Activated B cell treated with CpG ODN at 0.5 μM for 24 hours (primary cell): ENCODE measurements at regions of chr12 and their contacts with region 1.

Region 1: GRCh38 chr12:53727310-53728041 is at the start of gene CALCOCO1:
- DNase-seq: peak; percentile 90
- ATAC-seq: peak; percentile 97
- H3K4me3 Mint-ChIP-seq: peak within 1 kb of the TSS; percentile 97
- H3K27ac Mint-ChIP-seq: peak within 1 kb of the TSS; percentile 88
- H3K4me1 Mint-ChIP-seq: peaks cover 24% of the 10 kb centered on the region
- H3K27me3 Mint-ChIP-seq: no peaks in the 10 kb centered on the region
- CTCF ChIP-seq: no peak
- total RNA-seq, gene CALCOCO1: 44.2 and 59.5 TPM in 2 replicates

Region 2: GRCh38 chr12:53005986-53006809 is 721.3 kb before region 1 on chr12 and contains the start of gene EIF4B:
- CTCF ChIA-PET with region 1: no interaction called
- POLR2A ChIA-PET with region 1: no interaction called
- intact Hi-C with region 1: loop called (anchors 1 kb)
- DNase-seq: peak; percentile 97
- ATAC-seq: peak; percentile 90
- H3K4me3 Mint-ChIP-seq: peak within 1 kb of the TSS; percentile 98
- H3K27ac Mint-ChIP-seq: peak within 1 kb of the TSS; percentile 98
- H3K4me1 Mint-ChIP-seq: peaks cover 51% of the 10 kb centered on the region
- H3K27me3 Mint-ChIP-seq: peaks cover 1% of the 10 kb centered on the region
- CTCF ChIP-seq: no peak
- total RNA-seq, gene EIF4B: 726 and 733 TPM in 2 replicates

Region 3: GRCh38 chr12:53625946-53626701 is 101.4 kb before region 1 on chr12 and contains the start of gene ATF7:
- CTCF ChIA-PET with region 1: no interaction called
- POLR2A ChIA-PET with region 1: no interaction called
- intact Hi-C with region 1: loop called (anchors 1 kb)
- DNase-seq: peak; percentile 98
- ATAC-seq: peak; percentile 91
- H3K4me3 Mint-ChIP-seq: peak within 1 kb of the TSS; percentile 98
- H3K27ac Mint-ChIP-seq: peak within 1 kb of the TSS; percentile 99
- H3K4me1 Mint-ChIP-seq: peaks cover 43% of the 10 kb centered on the region
- H3K27me3 Mint-ChIP-seq: no peaks in the 10 kb centered on the region
- CTCF ChIP-seq: no peak
- total RNA-seq, gene ATF7: 29.5 and 36.8 TPM in 2 replicates

Region 4: DNA sequence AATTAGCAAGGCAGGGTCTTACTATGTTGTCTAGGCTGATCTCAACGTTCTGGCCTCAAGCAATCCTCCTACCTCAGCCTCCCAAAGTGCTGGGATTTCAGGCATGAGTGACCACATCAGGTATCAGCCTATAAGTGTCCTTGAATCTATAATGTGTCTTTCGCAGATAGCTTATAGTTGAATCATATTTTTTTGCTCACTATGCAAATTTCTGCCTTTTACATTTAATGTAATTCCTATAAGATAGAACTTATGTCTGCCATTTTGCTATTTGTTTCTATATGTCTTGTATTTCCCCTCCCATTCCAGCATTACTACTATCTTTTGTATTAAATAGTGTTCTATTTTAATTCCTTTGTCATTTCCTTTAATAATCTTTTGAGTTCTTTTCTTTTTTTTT is 90.8 kb before region 1 on chr12:
- CTCF ChIA-PET with region 1: no interaction called
- POLR2A ChIA-PET with region 1: no interaction called
- intact Hi-C with region 1: no loop called
- DNase-seq: no peak
- ATAC-seq: no peak
- H3K4me3 Mint-ChIP-seq: no peak overlapping the region
- H3K27ac Mint-ChIP-seq: no peak overlapping the region
- H3K4me1 Mint-ChIP-seq: no peaks in the 10 kb centered on the region
- H3K27me3 Mint-ChIP-seq: no peaks in the 10 kb centered on the region
- CTCF ChIP-seq: no peak

Region 5: GRCh38 chr12:53738406-53739213 is 11.1 kb after region 1 on chr12:
- CTCF ChIA-PET with region 1: interaction called, 138 read pairs
- POLR2A ChIA-PET with region 1: interaction called, 11 read pairs
- intact Hi-C with region 1: loop called (anchors 1 kb)
- DNase-seq: peak; percentile 50
- ATAC-seq: peak; percentile 78
- H3K4me3 Mint-ChIP-seq: peak overlapping the region; percentile 64
- H3K27ac Mint-ChIP-seq: no peak overlapping the region
- H3K4me1 Mint-ChIP-seq: peaks cover 21% of the 10 kb centered on the region
- H3K27me3 Mint-ChIP-seq: peaks cover 63% of the 10 kb centered on the region
- CTCF ChIP-seq: no peak

Region 6: GRCh38 chr12:53806721-53807120 is 79.2 kb after region 1 on chr12:
- CTCF ChIA-PET with region 1: no interaction called
- POLR2A ChIA-PET with region 1: no interaction called
- intact Hi-C with region 1: no loop called
- DNase-seq: no peak
- ATAC-seq: no peak
- H3K4me3 Mint-ChIP-seq: no peak overlapping the region
- H3K27ac Mint-ChIP-seq: no peak overlapping the region
- H3K4me1 Mint-ChIP-seq: no peaks in the 10 kb centered on the region
- H3K27me3 Mint-ChIP-seq: peaks cover 12% of the 10 kb centered on the region
- CTCF ChIP-seq: no peak

Region 7: GRCh38 chr12:54053751-54054741 is 326.6 kb after region 1 on chr12 and contains the start of gene HOXC4:
- CTCF ChIA-PET with region 1: no interaction called
- POLR2A ChIA-PET with region 1: no interaction called
- intact Hi-C with region 1: loop called (anchors 2 kb)
- DNase-seq: no peak
- ATAC-seq: peak; percentile 75
- H3K4me3 Mint-ChIP-seq: peak within 1 kb of the TSS; percentile 88
- H3K27ac Mint-ChIP-seq: peak within 1 kb of the TSS; percentile 89
- H3K4me1 Mint-ChIP-seq: peaks cover 50% of the 10 kb centered on the region
- H3K27me3 Mint-ChIP-seq: peaks cover 25% of the 10 kb centered on the region
- CTCF ChIP-seq: no peak
- total RNA-seq, gene HOXC4: 4.3 and 4.8 TPM in 2 replicates